ENCODE measurements at regions of chr12 and their contacts with region 1.

Region 1: GRCh38 chr12:39319187-39319586 is 123.7 kb downstream of the KIF21A start:
- DNase-seq: no peak
- ATAC-seq: no peak
- H3K4me3 ChIP-seq: no peak overlapping the region
- H3K4me3 Mint-ChIP-seq: no peak overlapping the region
- H3K27ac ChIP-seq: no peak overlapping the region
- H3K27ac Mint-ChIP-seq: no peak overlapping the region
- H3K4me1 ChIP-seq: no peaks in the 10 kb centered on the region
- H3K4me1 Mint-ChIP-seq: no peaks in the 10 kb centered on the region
- H3K27me3 ChIP-seq: no peaks in the 10 kb centered on the region
- H3K27me3 Mint-ChIP-seq: no peaks in the 10 kb centered on the region
- CTCF ChIP-seq: no peak

Region 2: GRCh38 chr12:39692258-39692853 is 373.2 kb after region 1 on chr12:
- CTCF ChIA-PET with region 1: interaction called, 4 read pairs
- POLR2A ChIA-PET with region 1: interaction called, 4 read pairs
- intact Hi-C with region 1: loop called (anchors 1 to 2 kb)
- DNase-seq: peak in 2 of 9 experiments; percentile 23 to 47
- ATAC-seq: peak; percentile 58
- H3K4me3 ChIP-seq: no peak overlapping the region
- H3K4me3 Mint-ChIP-seq: no peak overlapping the region
- H3K27ac ChIP-seq: no peak overlapping the region
- H3K27ac Mint-ChIP-seq: no peak overlapping the region
- H3K4me1 ChIP-seq: peaks cover 7% of the 10 kb centered on the region
- H3K4me1 Mint-ChIP-seq: peaks cover 6% of the 10 kb centered on the region
- H3K27me3 ChIP-seq: no peaks in the 10 kb centered on the region
- H3K27me3 Mint-ChIP-seq: no peaks in the 10 kb centered on the region
- CTCF ChIP-seq: peak; percentile 61

Measured in CD8-positive, alpha-beta T cell (primary cell).